CD14-positive monocyte (primary cell): ENCODE measurements at regions of chr2 and their contacts with region 1.

Region 1: GRCh38 chr2:68774569-68775271 is 40.1 kb downstream of the ARHGAP25 start:
- DNase-seq: peak; percentile 87 to 93 (median 92)
- H3K4me3 ChIP-seq: peak overlapping the region; percentile 20 to 73 (median 33)
- H3K4me3 Mint-ChIP-seq: peak overlapping the region; percentile 82 to 92
- H3K27ac ChIP-seq: peak overlapping the region; percentile 87 to 93
- H3K27ac Mint-ChIP-seq: peak overlapping the region; percentile 94 to 99 (median 97)
- H3K4me1 ChIP-seq: peaks cover 88 to 92% of the 10 kb centered on the region in 2 donors
- H3K4me1 Mint-ChIP-seq: peaks cover 82% of the 10 kb centered on the region
- H3K27me3 ChIP-seq: no peaks in the 10 kb centered on the region
- H3K27me3 Mint-ChIP-seq: no peaks in the 10 kb centered on the region
- CTCF ChIP-seq: no peak

Region 2: GRCh38 chr2:68734688-68735525 is 39.8 kb before region 1 on chr2 and contains the start of gene ARHGAP25:
- intact Hi-C with region 1: loop called in 1 of 2 experiments (anchors 5 kb)
- DNase-seq: peak; percentile 73 to 84 (median 75)
- H3K4me3 ChIP-seq: peak within 1 kb of the TSS; percentile 66 to 100 (median 83)
- H3K4me3 Mint-ChIP-seq: no peak within 1 kb of the TSS
- H3K27ac ChIP-seq: peak within 1 kb of the TSS; percentile 87 to 96
- H3K27ac Mint-ChIP-seq: no peak within 1 kb of the TSS
- H3K4me1 ChIP-seq: peaks cover 80 to 90% of the 10 kb centered on the region in 2 donors
- H3K4me1 Mint-ChIP-seq: peaks cover 38% of the 10 kb centered on the region
- H3K27me3 ChIP-seq: no peaks in the 10 kb centered on the region
- H3K27me3 Mint-ChIP-seq: no peaks in the 10 kb centered on the region
- CTCF ChIP-seq: no peak
- polyA plus RNA-seq, gene ARHGAP25: 20.8 to 56.8 (median 36.3) TPM

Region 3: GRCh38 chr2:68857855-68858456 is 83.2 kb after region 1 on chr2:
- intact Hi-C with region 1: no loop called
- DNase-seq: peak; percentile 80 to 98 (median 88)
- H3K4me3 ChIP-seq: no peak overlapping the region
- H3K4me3 Mint-ChIP-seq: peak overlapping the region; percentile 25 to 76
- H3K27ac ChIP-seq: peak overlapping the region; percentile 71 to 85
- H3K27ac Mint-ChIP-seq: peak overlapping the region; percentile 77 to 94 (median 91)
- H3K4me1 ChIP-seq: peaks cover 59 to 64% of the 10 kb centered on the region in 2 donors
- H3K4me1 Mint-ChIP-seq: peaks cover 62% of the 10 kb centered on the region
- H3K27me3 ChIP-seq: no peaks in the 10 kb centered on the region
- H3K27me3 Mint-ChIP-seq: no peaks in the 10 kb centered on the region
- CTCF ChIP-seq: no peak

Region 4: DNA sequence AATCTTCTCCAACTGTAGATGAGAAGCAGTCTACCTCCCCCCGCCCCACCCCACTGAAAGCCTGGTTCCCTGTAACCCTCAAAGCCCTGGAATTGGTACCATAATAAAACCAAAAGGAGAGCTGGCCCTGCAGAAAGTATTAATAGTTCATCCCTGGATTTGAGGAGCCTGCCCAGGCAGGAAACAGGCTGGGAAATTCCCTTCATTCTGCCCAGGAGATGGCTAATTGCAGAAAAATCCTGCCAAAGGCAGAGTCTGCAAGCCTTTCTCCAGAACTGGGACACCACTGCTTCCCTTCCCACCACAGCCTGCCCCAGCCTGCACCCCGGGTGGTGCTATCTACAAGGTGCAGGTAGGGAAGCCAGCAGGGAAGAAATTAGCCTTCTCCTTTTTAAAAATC is 161.7 kb after region 1 on chr2:
- intact Hi-C with region 1: no loop called
- DNase-seq: no peak
- H3K4me3 ChIP-seq: no peak overlapping the region
- H3K4me3 Mint-ChIP-seq: no peak overlapping the region
- H3K27ac ChIP-seq: no peak overlapping the region
- H3K27ac Mint-ChIP-seq: no peak overlapping the region
- H3K4me1 ChIP-seq: no peaks in the 10 kb centered on the region
- H3K4me1 Mint-ChIP-seq: no peaks in the 10 kb centered on the region
- H3K27me3 ChIP-seq: no peaks in the 10 kb centered on the region
- H3K27me3 Mint-ChIP-seq: peaks cover 1 to 7% (median 2%) of the 10 kb centered on the region in 3 donors
- CTCF ChIP-seq: no peak